ENCODE measurements at regions of chr18 and their contacts with region 1.

Region 1: GRCh38 chr18:21012308-21012707 is 99.3 kb downstream of the ROCK1 start:
- ATAC-seq: no peak
- H3K4me3 ChIP-seq: no peak overlapping the region
- H3K27ac ChIP-seq: no peak overlapping the region
- H3K4me1 ChIP-seq: no peaks in the 10 kb centered on the region

Region 2: GRCh38 chr18:21099442-21099841 is 87.1 kb after region 1 on chr18:
- in situ Hi-C with region 1: loop called in 1 of 9 experiments (anchors 10 kb)
- ATAC-seq: no peak
- H3K4me3 ChIP-seq: no peak overlapping the region
- H3K27ac ChIP-seq: no peak overlapping the region
- H3K4me1 ChIP-seq: no peaks in the 10 kb centered on the region

Region 3: DNA sequence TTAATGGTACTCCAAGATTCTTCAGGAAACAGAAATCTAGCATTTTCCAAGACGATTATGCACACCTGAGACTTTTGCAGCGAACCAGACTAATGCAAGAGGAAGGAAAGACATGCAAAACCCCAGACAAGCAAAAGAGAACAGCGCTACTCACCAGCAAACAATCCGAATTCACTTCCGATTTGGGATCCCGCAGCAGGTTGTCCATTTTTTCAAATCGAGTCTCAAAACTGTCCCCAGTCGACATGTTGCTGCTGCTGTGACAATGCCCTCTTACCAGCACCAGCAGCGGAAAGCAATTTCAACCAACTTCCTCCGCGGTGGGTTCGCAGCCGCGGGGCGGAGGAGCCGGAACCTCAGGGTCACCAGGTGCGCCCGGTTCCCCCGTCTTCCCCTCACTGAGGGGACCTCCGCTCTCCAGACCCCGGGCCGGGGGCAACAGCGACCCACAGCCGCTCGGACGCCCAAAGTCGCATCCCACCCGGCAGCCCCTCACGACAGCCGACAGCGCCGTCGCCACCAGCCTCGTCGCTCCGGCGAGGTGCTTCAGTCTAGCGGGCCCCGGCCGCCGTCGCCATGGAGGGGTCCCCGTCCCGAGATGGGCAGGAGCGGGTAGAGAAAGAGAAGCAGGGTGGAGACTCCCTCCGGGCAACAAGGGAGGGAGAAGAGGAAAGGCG is 98.5 kb after region 1 on chr18:
- in situ Hi-C with region 1: no loop called
- ATAC-seq: peak in 3 of 8 experiments; percentile 0 to 2 (median 1)
- H3K4me3 ChIP-seq: peak overlapping the region; percentile 75 to 98 (median 89)
- H3K27ac ChIP-seq: peak overlapping the region; percentile 87 to 88
- H3K4me1 ChIP-seq: peaks cover 15 to 20% of the 10 kb centered on the region in 2 donors

Region 4: GRCh38 chr18:22551536-22552151 is 1539.3 kb after region 1 on chr18:
- in situ Hi-C with region 1: no loop called
- ATAC-seq: peak in 3 of 8 experiments; percentile 29 to 64 (median 64)
- H3K4me3 ChIP-seq: no peak overlapping the region
- H3K27ac ChIP-seq: no peak overlapping the region
- H3K4me1 ChIP-seq: no peaks in the 10 kb centered on the region